ENCODE measurements at regions of chr10 and their contacts with region 1.

Region 1: GRCh38 chr10:10589540-10590303 is 427.9 kb upstream of the CELF2 start:
- DNase-seq: no peak
- H3K4me3 ChIP-seq: no peak overlapping the region
- H3K27ac ChIP-seq: no peak overlapping the region
- H3K4me1 ChIP-seq: no peaks in the 10 kb centered on the region
- H3K27me3 ChIP-seq: no peaks in the 10 kb centered on the region
- CTCF ChIP-seq: no peak
- POLR2A ChIP-seq: no peak

Region 2: DNA sequence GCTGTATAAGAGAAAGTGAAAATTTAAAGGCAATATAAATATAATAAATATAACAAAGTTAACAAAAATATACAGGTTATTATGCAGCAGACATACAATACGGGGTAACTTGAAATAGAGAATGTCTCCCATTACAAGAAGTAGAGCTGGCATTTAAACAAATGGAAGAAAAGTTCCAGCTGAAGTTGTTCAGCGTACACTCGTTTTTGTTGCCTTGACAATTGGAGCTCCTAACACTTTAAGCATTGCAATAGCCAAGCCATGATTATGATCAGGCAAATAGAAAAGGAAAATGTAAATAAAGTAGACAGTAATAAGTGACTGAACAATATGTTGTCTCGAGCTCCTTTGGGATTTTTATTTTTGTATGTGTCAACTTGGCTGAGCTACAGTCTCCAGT is 309.8 kb before region 1 on chr10:
- intact Hi-C with region 1: no loop called
- DNase-seq: no peak
- H3K4me3 ChIP-seq: no peak overlapping the region
- H3K27ac ChIP-seq: no peak overlapping the region
- H3K4me1 ChIP-seq: no peaks in the 10 kb centered on the region
- H3K27me3 ChIP-seq: no peaks in the 10 kb centered on the region
- CTCF ChIP-seq: no peak
- POLR2A ChIP-seq: no peak

Region 3: DNA sequence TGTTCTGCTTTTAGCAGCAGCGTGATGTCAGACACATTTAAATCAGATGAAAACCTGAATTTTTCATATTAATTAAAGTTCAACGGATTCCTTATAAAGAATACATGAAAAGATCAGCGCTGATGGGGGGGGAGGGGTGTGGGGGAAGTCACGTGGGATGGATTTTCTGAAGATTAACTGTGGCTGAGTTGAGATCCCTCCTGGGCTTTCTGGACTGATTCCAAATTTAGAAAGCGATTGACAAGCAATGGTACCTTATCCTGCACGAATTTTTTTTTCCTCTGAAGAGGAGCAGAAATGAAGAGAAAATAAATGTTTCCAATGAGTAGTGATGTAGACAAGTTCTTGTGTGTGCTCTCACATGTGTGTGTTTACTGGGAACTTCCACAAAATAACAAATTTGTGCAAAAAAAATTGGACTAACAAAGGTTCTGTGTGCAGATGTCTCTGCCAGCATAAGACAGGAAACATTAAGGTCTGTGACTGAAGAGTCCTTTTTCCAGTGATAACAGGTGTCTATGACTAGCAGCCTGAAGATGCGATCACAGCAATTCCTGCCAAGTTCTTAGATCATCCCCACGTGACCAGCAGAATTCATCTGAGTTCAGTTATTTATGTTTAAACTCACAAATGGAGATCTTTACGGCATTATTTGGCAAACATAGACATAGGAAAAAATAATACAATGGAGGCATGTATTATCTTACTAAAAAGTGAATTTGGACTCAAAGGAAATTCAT is 157.3 kb before region 1 on chr10:
- intact Hi-C with region 1: no loop called
- DNase-seq: no peak
- H3K4me3 ChIP-seq: no peak overlapping the region
- H3K27ac ChIP-seq: no peak overlapping the region
- H3K4me1 ChIP-seq: no peaks in the 10 kb centered on the region
- H3K27me3 ChIP-seq: no peaks in the 10 kb centered on the region
- CTCF ChIP-seq: no peak
- POLR2A ChIP-seq: no peak

Region 4: GRCh38 chr10:10564081-10564794 is 25.5 kb before region 1 on chr10:
- intact Hi-C with region 1: loop called (anchors 1 kb)
- DNase-seq: no peak
- H3K4me3 ChIP-seq: no peak overlapping the region
- H3K27ac ChIP-seq: no peak overlapping the region
- H3K4me1 ChIP-seq: no peaks in the 10 kb centered on the region
- H3K27me3 ChIP-seq: no peaks in the 10 kb centered on the region
- CTCF ChIP-seq: no peak
- POLR2A ChIP-seq: no peak

Measured in breast epithelium (tissue), 4 donors.